ENCODE measurements at regions of chr17 and their contacts with region 1.

Region 1: GRCh38 chr17:8222630-8223356 is 12.4 kb upstream of the AURKB start:
- DNase-seq: peak; percentile 93
- H3K4me3 ChIP-seq: peak overlapping the region; percentile 51
- H3K27ac ChIP-seq: peak overlapping the region; percentile 91
- H3K4me1 ChIP-seq: peaks cover 10% of the 10 kb centered on the region
- H3K27me3 ChIP-seq: no peaks in the 10 kb centered on the region
- CTCF ChIP-seq: no peak

Region 2: GRCh38 chr17:7956228-7956965 is 266.4 kb before region 1 on chr17:
- intact Hi-C with region 1: no loop called
- DNase-seq: no peak
- H3K4me3 ChIP-seq: no peak overlapping the region
- H3K27ac ChIP-seq: no peak overlapping the region
- H3K4me1 ChIP-seq: no peaks in the 10 kb centered on the region
- H3K27me3 ChIP-seq: no peaks in the 10 kb centered on the region
- CTCF ChIP-seq: no peak

Region 3: GRCh38 chr17:8162233-8162996 is 60.4 kb before region 1 on chr17 and contains the start of gene VAMP2:
- intact Hi-C with region 1: no loop called
- DNase-seq: peak; percentile 78
- H3K4me3 ChIP-seq: peak within 1 kb of the TSS; percentile 96
- H3K27ac ChIP-seq: peak within 1 kb of the TSS; percentile 98
- H3K4me1 ChIP-seq: peaks cover 22% of the 10 kb centered on the region
- H3K27me3 ChIP-seq: no peaks in the 10 kb centered on the region
- CTCF ChIP-seq: no peak
- total RNA-seq, gene VAMP2: 34.0 to 38.8 TPM

Region 4: DNA sequence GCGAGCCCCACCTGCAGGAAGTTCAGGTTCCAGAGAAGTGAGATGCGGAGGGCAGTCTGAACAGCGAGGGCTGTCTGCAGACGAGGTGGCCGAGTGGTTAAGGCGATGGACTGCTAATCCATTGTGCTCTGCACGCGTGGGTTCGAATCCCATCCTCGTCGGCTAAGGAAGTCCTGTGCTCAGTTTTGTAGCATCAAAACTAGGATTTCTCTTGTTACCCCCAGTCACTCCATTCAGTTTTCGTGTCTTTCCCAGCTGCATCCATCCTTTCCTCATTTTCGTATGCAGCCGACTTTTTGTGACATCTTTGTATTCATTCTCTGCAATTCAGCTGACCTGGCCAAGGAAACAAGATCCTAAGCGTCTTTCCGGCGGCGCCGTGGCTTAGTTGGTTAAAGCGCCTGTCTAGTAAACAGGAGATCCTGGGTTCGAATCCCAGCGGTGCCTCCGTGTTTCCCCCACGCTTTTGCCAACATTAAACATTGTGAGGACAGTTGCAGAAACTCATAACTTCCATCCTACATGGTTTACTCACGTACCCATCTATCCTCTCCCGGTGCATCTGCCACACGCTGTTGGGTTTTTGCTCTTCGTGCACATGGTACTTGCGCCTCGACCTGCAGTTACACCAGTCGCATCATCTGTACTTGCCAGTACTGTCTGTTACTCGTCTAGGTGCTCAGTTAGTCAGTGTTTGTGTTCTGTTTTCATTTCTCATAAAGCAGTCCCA is 35.8 kb before region 1 on chr17:
- intact Hi-C with region 1: loop called (anchors 2 kb)
- DNase-seq: peak; percentile 94
- H3K4me3 ChIP-seq: peak overlapping the region; percentile 75
- H3K27ac ChIP-seq: peak overlapping the region; percentile 96
- H3K4me1 ChIP-seq: no peaks in the 10 kb centered on the region
- H3K27me3 ChIP-seq: no peaks in the 10 kb centered on the region
- CTCF ChIP-seq: no peak